CD4-positive, alpha-beta T cell (primary cell): ENCODE measurements at regions of chr4 and their contacts with region 1.

Region 1: GRCh38 chr4:2536193-2537010 is at the start of gene FAM193A:
- DNase-seq: peak; percentile 96 to 100 (median 98)
- ATAC-seq: peak; percentile 95
- H3K4me3 ChIP-seq: peak within 1 kb of the TSS; percentile 61
- H3K4me3 Mint-ChIP-seq: peak within 1 kb of the TSS; percentile 95
- H3K27ac ChIP-seq: peak within 1 kb of the TSS; percentile 26 to 70
- H3K27ac Mint-ChIP-seq: peak within 1 kb of the TSS; percentile 89
- H3K4me1 ChIP-seq: peaks cover 43% of the 10 kb centered on the region
- H3K4me1 Mint-ChIP-seq: peaks cover 20% of the 10 kb centered on the region
- H3K27me3 ChIP-seq: no peaks in the 10 kb centered on the region
- H3K27me3 Mint-ChIP-seq: no peaks in the 10 kb centered on the region
- CTCF ChIP-seq: no peak
- total RNA-seq, gene FAM193A: 28.4 to 30.0 TPM

Region 2: GRCh38 chr4:1683736-1684505 is 852.5 kb before region 1 on chr4 and contains the start of gene FAM53A:
- CTCF ChIA-PET with region 1: no interaction called
- POLR2A ChIA-PET with region 1: no interaction called
- intact Hi-C with region 1: loop called in 1 of 2 experiments (anchors 10 kb)
- DNase-seq: peak in 11 of 14 experiments; percentile 7 to 96 (median 41)
- ATAC-seq: peak; percentile 91
- H3K4me3 ChIP-seq: peak within 1 kb of the TSS; percentile 58
- H3K4me3 Mint-ChIP-seq: peak within 1 kb of the TSS; percentile 93
- H3K27ac ChIP-seq: no peak within 1 kb of the TSS
- H3K27ac Mint-ChIP-seq: peak within 1 kb of the TSS; percentile 85
- H3K4me1 ChIP-seq: peaks cover 19% of the 10 kb centered on the region
- H3K4me1 Mint-ChIP-seq: peaks cover 13% of the 10 kb centered on the region
- H3K27me3 ChIP-seq: no peaks in the 10 kb centered on the region
- H3K27me3 Mint-ChIP-seq: no peaks in the 10 kb centered on the region
- CTCF ChIP-seq: no peak
- total RNA-seq, gene FAM53A: 0.93 to 2.4 TPM

Region 3: DNA sequence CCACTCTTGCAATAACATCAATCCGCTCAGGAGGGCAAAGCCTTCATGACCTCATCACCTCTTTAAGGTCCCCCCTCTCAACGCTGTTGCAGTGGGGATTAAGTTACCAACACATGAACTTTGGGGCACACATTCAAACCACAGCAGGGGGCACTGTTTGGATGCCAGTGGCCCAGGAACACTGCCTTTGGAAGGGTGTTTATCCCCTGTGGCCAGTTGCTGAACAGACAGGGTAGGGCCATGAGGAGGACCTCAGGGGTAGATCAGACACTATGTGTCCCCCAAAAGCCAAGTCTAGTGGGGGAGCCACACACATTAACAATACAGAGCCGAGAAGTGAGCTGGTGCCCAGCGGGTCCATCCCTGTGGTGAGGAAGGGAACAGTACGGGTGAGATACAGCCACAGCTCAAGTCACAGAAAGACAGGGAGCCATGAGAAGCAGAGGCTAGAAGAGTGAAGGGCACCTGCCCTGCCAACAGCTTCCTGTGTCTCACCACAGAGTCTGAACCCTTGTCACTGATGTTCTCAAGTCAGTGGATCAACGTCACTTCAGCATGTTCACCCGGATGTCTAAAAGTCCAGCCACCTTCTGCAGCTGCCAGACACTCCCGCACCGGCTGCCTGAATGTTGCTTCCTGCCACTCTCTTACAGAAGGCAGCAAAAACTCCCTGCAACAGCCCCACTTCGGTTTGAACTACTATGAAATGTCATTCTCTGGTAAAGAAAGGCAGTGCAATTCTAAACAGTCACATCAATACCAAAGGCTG is 254.6 kb before region 1 on chr4:
- CTCF ChIA-PET with region 1: no interaction called
- POLR2A ChIA-PET with region 1: no interaction called
- intact Hi-C with region 1: loop called in 1 of 2 experiments (anchors 5 kb)
- DNase-seq: peak; percentile 74 to 97 (median 84)
- ATAC-seq: peak; percentile 87
- H3K4me3 ChIP-seq: peak overlapping the region; percentile 13
- H3K4me3 Mint-ChIP-seq: peak overlapping the region; percentile 78
- H3K27ac ChIP-seq: peak overlapping the region; percentile 87 to 96
- H3K27ac Mint-ChIP-seq: peak overlapping the region; percentile 95
- H3K4me1 ChIP-seq: peaks cover 57% of the 10 kb centered on the region
- H3K4me1 Mint-ChIP-seq: peaks cover 38% of the 10 kb centered on the region
- H3K27me3 ChIP-seq: no peaks in the 10 kb centered on the region
- H3K27me3 Mint-ChIP-seq: no peaks in the 10 kb centered on the region
- CTCF ChIP-seq: peak; percentile 25

Region 4: GRCh38 chr4:2468445-2469192 is 67.8 kb before region 1 on chr4 and contains the start of gene RNF4:
- CTCF ChIA-PET with region 1: interaction called, 5 read pairs
- POLR2A ChIA-PET with region 1: interaction called, 48 read pairs
- intact Hi-C with region 1: loop called (anchors 1 to 5 kb)
- DNase-seq: peak; percentile 89 to 98 (median 94)
- ATAC-seq: peak; percentile 84
- H3K4me3 ChIP-seq: peak within 1 kb of the TSS; percentile 98
- H3K4me3 Mint-ChIP-seq: peak within 1 kb of the TSS; percentile 94
- H3K27ac ChIP-seq: peak within 1 kb of the TSS; percentile 96 to 97
- H3K27ac Mint-ChIP-seq: peak within 1 kb of the TSS; percentile 94
- H3K4me1 ChIP-seq: peaks cover 48% of the 10 kb centered on the region
- H3K4me1 Mint-ChIP-seq: peaks cover 48% of the 10 kb centered on the region
- H3K27me3 ChIP-seq: no peaks in the 10 kb centered on the region
- H3K27me3 Mint-ChIP-seq: no peaks in the 10 kb centered on the region
- CTCF ChIP-seq: no peak
- total RNA-seq, gene RNF4: 106 to 109 TPM

Region 5: DNA sequence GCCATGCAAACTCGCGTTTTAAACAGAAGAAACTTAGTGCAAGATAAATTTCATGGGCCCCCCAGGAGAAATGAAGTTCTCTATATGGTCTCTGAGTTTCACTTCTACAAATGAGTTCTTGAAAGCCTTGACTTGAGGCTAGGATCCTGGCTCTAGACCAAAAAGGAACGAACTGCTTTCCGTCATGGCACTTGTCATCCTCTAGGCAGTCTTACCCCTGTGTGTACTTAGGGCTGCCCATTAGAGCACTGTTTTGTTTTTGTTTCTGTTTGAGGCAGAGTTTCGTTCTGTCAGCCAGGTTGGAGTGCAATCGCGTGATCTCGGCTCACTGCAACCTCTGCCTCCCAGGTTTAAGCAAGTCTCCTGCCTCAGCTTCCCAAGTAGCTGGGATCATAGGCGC is 38.5 kb before region 1 on chr4:
- CTCF ChIA-PET with region 1: no interaction called
- POLR2A ChIA-PET with region 1: no interaction called
- intact Hi-C with region 1: no loop called
- DNase-seq: peak in 3 of 14 experiments; percentile 23 to 46 (median 41)
- ATAC-seq: no peak
- H3K4me3 ChIP-seq: no peak overlapping the region
- H3K4me3 Mint-ChIP-seq: no peak overlapping the region
- H3K27ac ChIP-seq: no peak overlapping the region
- H3K27ac Mint-ChIP-seq: no peak overlapping the region
- H3K4me1 ChIP-seq: no peaks in the 10 kb centered on the region
- H3K4me1 Mint-ChIP-seq: peaks cover 12% of the 10 kb centered on the region
- H3K27me3 ChIP-seq: no peaks in the 10 kb centered on the region
- H3K27me3 Mint-ChIP-seq: no peaks in the 10 kb centered on the region
- CTCF ChIP-seq: no peak

Region 6: DNA sequence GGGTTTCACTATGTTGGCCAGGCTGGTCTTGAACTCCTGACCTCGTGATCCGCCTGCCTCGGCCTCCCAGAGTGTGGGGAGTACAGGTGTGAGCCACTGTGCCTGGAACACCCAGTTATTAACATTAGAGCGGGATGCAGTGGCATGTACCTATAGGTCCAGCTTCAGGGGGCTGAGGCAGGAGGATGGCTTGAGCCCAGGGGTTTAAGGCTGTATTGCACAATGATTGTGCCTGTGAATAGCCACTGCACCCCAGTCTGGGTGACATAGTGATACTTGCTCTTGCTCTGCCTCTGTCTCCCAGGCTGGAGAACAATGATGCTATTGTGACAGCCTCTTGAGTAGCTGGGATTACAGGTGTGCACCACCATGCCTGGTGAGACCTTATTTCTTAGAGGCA is 39.9 kb after region 1 on chr4:
- CTCF ChIA-PET with region 1: no interaction called
- POLR2A ChIA-PET with region 1: no interaction called
- intact Hi-C with region 1: no loop called
- DNase-seq: no peak
- ATAC-seq: no peak
- H3K4me3 ChIP-seq: no peak overlapping the region
- H3K4me3 Mint-ChIP-seq: no peak overlapping the region
- H3K27ac ChIP-seq: no peak overlapping the region
- H3K27ac Mint-ChIP-seq: no peak overlapping the region
- H3K4me1 ChIP-seq: peaks cover 21% of the 10 kb centered on the region
- H3K4me1 Mint-ChIP-seq: peaks cover 50% of the 10 kb centered on the region
- H3K27me3 ChIP-seq: no peaks in the 10 kb centered on the region
- H3K27me3 Mint-ChIP-seq: no peaks in the 10 kb centered on the region
- CTCF ChIP-seq: no peak

Region 7: DNA sequence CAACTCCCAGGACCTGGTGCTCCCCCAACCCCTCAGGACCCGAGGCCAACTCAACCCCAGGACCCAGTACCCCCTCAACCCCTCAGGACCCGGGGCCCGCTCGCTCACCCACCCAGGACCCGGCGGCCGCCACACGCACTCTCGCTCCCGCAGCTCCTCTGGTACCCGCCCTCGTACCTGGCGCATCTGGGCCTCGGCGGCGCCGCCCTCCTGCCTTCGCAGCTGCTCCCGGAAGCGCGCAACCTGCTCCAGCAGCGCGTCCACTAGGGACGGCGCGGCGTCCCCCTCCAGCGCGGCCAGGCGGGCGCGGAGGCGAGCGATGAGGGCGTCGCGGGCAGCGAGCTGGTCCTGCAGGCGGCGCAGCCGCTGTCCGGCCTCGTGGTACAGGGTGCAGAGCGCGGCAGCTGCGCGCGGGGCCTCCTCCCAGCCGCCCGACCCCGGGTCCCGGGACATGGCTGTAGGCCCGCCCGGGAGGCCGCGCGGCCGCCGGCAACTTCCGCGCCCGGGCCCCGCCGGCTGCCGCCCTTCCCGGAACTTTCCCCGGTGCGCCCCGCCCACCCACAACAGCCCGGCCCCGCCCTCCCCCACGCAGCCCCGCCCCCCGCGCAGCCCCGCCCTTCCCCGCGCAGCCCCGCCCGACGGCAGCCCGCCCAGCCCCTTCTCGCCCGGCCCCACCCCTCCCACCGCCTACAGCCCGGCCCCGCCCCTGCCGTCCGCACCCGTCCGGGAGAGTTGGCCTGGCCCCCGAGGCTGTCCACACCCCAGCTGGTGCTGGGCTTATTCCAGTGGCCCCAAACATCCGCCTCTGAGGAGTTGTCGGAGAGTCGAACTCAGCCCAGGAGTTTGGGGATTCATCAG is 219.7 kb after region 1 on chr4 and contains the start of gene TNIP2:
- CTCF ChIA-PET with region 1: no interaction called
- POLR2A ChIA-PET with region 1: no interaction called
- intact Hi-C with region 1: loop called in 1 of 2 experiments (anchors 5 kb)
- DNase-seq: peak; percentile 63 to 91 (median 76)
- ATAC-seq: peak; percentile 78
- H3K4me3 ChIP-seq: peak within 1 kb of the TSS; percentile 68
- H3K4me3 Mint-ChIP-seq: peak within 1 kb of the TSS; percentile 90
- H3K27ac ChIP-seq: peak within 1 kb of the TSS; percentile 29 to 56
- H3K27ac Mint-ChIP-seq: peak within 1 kb of the TSS; percentile 73
- H3K4me1 ChIP-seq: peaks cover 33% of the 10 kb centered on the region
- H3K4me1 Mint-ChIP-seq: peaks cover 31% of the 10 kb centered on the region
- H3K27me3 ChIP-seq: no peaks in the 10 kb centered on the region
- H3K27me3 Mint-ChIP-seq: no peaks in the 10 kb centered on the region
- CTCF ChIP-seq: no peak
- total RNA-seq, gene TNIP2: 43.8 to 49.1 TPM

Region 8: DNA sequence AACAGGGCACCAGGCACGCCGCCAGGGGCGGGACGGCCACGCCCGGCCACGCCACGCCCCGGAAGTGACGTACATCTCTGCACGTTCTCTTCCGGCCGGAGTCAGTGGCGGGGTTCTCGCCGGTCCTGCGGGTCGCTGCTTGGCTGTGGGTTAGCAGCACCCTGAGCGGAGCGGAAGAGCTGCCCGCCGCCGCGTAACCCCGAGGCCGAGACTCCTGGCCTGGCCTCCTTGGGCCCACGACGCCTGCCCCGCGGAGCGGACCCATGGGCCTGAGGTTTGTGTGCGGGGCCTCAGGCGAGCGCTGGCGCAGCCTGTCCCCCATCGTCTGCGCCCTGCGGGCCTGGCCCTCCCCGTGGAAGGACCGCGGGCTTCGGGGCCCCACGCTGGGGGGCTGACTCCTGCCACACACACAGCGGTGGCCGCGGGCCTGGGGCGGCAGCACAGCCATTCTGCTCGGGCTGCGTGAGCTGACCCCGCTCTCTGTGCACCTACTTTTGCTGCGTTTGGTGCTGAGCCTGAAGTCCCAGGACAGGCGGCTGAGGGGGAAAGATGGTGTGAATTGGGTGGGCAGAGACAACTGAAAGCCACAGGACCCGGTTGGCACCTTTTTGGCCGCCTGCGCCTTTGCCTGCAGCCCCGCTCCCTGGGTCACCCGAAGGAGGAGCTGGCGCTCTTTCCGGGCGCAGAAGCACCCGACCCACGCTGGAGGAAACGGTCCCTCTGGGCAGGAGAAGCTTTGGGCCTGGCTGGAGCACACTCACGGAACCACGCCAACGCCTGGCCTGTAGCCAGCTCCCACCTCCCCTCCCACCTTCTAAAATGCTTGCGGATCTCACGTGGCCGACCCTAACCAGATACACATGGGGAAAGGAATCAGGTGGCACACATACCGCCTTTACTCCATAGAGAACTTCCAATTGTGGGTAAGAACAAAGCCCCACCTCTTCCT is 398.7 kb after region 1 on chr4:
- CTCF ChIA-PET with region 1: no interaction called
- POLR2A ChIA-PET with region 1: interaction called, 4 read pairs
- intact Hi-C with region 1: loop called in 1 of 2 experiments (anchors 2 kb)
- DNase-seq: peak; percentile 93 to 99 (median 96)
- ATAC-seq: peak; percentile 58
- H3K4me3 ChIP-seq: peak overlapping the region; percentile 92
- H3K4me3 Mint-ChIP-seq: peak overlapping the region; percentile 93
- H3K27ac ChIP-seq: peak overlapping the region; percentile 82 to 87
- H3K27ac Mint-ChIP-seq: peak overlapping the region; percentile 94
- H3K4me1 ChIP-seq: peaks cover 71% of the 10 kb centered on the region
- H3K4me1 Mint-ChIP-seq: peaks cover 45% of the 10 kb centered on the region
- H3K27me3 ChIP-seq: no peaks in the 10 kb centered on the region
- H3K27me3 Mint-ChIP-seq: no peaks in the 10 kb centered on the region
- CTCF ChIP-seq: no peak

Region 9: GRCh38 chr4:3074078-3074795 is 537.8 kb after region 1 on chr4 and contains the starts of genes HTT and HTT-AS:
- CTCF ChIA-PET with region 1: no interaction called
- POLR2A ChIA-PET with region 1: no interaction called
- intact Hi-C with region 1: loop called in 1 of 2 experiments (anchors 5 kb)
- DNase-seq: peak; percentile 93 to 99 (median 98)
- ATAC-seq: peak; percentile 84
- H3K4me3 ChIP-seq: peak within 1 kb of the TSS; percentile 80
- H3K4me3 Mint-ChIP-seq: peak within 1 kb of the TSS; percentile 92
- H3K27ac ChIP-seq: peak within 1 kb of the TSS; percentile 72 to 87
- H3K27ac Mint-ChIP-seq: peak within 1 kb of the TSS; percentile 86
- H3K4me1 ChIP-seq: peaks cover 23% of the 10 kb centered on the region
- H3K4me1 Mint-ChIP-seq: peaks cover 26% of the 10 kb centered on the region
- H3K27me3 ChIP-seq: no peaks in the 10 kb centered on the region
- H3K27me3 Mint-ChIP-seq: no peaks in the 10 kb centered on the region
- CTCF ChIP-seq: no peak
- total RNA-seq, gene HTT: 56.9 to 62.6 TPM
- total RNA-seq, gene HTT-AS: not detected